ENCODE measurements at regions of chr9 and their contacts with region 1.

Region 1: DNA sequence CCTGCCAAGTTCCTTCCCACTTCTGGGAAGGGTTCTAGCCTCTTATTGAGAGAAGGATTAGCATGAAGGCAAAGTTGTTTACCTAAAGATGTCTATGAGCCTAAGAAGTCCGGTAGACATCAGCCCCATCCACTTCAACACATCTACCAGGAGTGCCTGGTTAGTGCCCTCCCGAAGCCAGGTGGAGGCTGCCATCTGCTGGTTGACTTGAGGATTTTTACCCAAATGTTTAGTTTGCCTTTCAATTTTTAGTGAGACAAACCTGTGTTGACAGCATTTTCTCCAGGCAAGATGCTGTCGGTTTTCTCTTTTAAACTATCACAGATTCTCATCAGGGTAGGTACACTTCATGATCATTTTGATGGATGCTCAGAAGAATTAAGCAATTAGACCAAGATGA is 83.6 kb upstream of the TNFSF8 start:
- DNase-seq: peak; percentile 75 to 84
- ATAC-seq: peak; percentile 83
- H3K4me3 ChIP-seq: no peak overlapping the region
- H3K27ac ChIP-seq: no peak overlapping the region
- H3K4me1 ChIP-seq: peaks cover 0 to 4% of the 10 kb centered on the region in 2 donors
- H3K27me3 ChIP-seq: no peaks in the 10 kb centered on the region

Region 2: DNA sequence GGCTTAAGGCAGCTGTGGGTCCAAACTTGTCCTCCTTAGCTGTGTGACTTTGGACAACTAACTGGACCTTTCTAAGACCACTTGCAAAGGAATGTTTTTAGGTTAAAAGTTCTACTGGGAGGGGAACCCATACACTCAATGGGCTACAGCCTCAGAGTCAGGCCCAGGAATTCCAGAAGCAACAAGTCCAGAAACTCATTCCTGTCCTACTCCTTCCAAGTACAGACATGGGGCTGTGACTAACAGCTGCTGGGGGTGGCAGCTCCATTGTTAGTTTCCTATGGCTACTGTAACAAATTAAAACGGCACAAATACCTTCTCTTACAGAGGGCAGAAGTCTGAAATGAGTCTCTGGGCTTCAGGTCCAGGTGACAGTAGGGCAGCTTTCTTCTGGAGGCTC is 613.8 kb before region 1 on chr9:
- intact Hi-C with region 1: loop called (anchors 5 kb)
- DNase-seq: no peak
- ATAC-seq: no peak
- H3K4me3 ChIP-seq: no peak overlapping the region
- H3K27ac ChIP-seq: no peak overlapping the region
- H3K4me1 ChIP-seq: peaks cover 0 to 2% of the 10 kb centered on the region in 2 donors
- H3K27me3 ChIP-seq: no peaks in the 10 kb centered on the region

Region 3: GRCh38 chr9:114662081-114662989 is 351.7 kb before region 1 on chr9:
- intact Hi-C with region 1: loop called in 1 of 2 experiments (anchors 5 kb)
- DNase-seq: no peak
- ATAC-seq: peak; percentile 68
- H3K4me3 ChIP-seq: no peak overlapping the region
- H3K27ac ChIP-seq: no peak overlapping the region
- H3K4me1 ChIP-seq: no peaks in the 10 kb centered on the region
- H3K27me3 ChIP-seq: no peaks in the 10 kb centered on the region

Region 4: DNA sequence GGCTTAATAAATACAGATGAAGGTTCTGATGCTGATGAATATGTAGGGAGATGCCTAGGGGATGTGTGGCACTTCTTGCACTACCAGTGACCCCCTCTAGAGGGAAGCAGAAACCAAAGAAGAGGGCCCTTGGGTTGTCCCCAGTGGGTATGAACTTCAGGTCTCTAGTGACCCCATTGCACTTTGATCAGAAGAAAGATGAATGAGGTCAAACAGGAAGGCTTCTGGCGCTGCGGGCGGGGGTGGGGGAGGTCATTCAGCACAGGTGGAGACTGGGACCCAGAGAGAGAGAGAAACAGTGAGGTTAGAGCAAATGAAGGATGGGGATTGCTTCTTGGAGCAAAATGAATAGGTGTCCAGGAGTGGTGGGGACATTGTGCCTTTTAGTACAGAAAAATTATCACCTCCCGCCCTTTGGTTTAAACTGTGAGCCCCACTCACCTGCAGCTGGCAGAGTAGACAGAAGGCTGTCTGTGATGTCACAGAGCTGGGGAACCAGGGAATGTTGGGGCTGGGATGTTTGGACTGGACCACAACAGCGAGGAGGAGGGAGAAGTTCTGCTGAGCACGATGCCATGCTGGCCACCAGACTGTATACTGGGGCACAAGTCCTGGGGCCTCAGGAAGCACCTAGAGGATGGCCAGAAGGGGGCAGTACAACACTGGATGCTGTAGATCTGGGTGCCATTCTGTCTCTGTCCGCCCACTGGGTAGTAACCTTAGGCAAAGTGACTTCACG is 332.2 kb before region 1 on chr9 and contains the start of gene TEX48:
- intact Hi-C with region 1: loop called in 1 of 2 experiments (anchors 5 kb)
- DNase-seq: peak in 1 of 2 donors; percentile 61
- ATAC-seq: peak; percentile 69
- H3K4me3 ChIP-seq: no peak within 1 kb of the TSS
- H3K27ac ChIP-seq: no peak within 1 kb of the TSS
- H3K4me1 ChIP-seq: no peaks in the 10 kb centered on the region
- H3K27me3 ChIP-seq: no peaks in the 10 kb centered on the region
- total RNA-seq, gene TEX48: not detected

Region 5: GRCh38 chr9:114906908-114907571 is 107.0 kb before region 1 on chr9:
- intact Hi-C with region 1: loop called (anchors 2 to 5 kb)
- DNase-seq: no peak
- ATAC-seq: peak; percentile 60
- H3K4me3 ChIP-seq: no peak overlapping the region
- H3K27ac ChIP-seq: no peak overlapping the region
- H3K4me1 ChIP-seq: no peaks in the 10 kb centered on the region
- H3K27me3 ChIP-seq: no peaks in the 10 kb centered on the region

Region 6: DNA sequence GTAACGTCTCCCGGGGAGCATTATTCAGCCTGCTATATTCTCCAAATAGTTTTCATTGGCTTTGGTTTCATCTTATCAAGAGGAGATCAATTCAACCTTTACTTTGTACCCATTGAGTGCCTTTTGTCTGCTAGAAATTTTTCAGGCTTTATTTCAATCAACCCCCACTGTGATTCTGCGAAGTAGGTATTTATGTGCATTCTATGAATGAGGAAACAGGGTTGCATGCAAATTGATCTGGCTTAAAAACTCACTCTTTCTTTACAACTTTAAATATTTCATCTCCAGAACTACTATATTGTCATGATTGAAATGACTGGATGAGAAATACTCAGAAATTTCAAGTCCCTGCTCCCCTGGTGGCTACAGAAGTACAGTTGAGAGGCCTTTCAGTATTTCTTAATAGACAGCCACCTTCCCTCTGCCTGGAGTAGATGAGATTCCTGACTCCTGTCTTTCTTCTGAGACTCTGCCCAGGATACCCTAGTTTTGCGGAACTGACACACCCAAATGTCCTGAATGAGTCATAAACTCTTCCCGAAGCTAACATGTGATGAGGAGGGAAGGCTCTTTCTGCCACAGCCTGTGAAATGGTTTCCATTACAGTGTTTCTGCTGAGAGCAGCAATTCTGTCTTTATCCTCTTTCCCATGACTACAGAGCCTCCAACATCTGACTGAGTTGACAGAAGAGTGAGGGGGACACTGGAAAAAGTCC is 156.5 kb after region 1 on chr9:
- intact Hi-C with region 1: no loop called
- DNase-seq: no peak
- ATAC-seq: no peak
- H3K4me3 ChIP-seq: no peak overlapping the region
- H3K27ac ChIP-seq: no peak overlapping the region
- H3K4me1 ChIP-seq: no peaks in the 10 kb centered on the region
- H3K27me3 ChIP-seq: no peaks in the 10 kb centered on the region

Measured in aorta (tissue), 5 donors.